ENCODE measurements at regions of chr18 and their contacts with region 1.

Region 1: DNA sequence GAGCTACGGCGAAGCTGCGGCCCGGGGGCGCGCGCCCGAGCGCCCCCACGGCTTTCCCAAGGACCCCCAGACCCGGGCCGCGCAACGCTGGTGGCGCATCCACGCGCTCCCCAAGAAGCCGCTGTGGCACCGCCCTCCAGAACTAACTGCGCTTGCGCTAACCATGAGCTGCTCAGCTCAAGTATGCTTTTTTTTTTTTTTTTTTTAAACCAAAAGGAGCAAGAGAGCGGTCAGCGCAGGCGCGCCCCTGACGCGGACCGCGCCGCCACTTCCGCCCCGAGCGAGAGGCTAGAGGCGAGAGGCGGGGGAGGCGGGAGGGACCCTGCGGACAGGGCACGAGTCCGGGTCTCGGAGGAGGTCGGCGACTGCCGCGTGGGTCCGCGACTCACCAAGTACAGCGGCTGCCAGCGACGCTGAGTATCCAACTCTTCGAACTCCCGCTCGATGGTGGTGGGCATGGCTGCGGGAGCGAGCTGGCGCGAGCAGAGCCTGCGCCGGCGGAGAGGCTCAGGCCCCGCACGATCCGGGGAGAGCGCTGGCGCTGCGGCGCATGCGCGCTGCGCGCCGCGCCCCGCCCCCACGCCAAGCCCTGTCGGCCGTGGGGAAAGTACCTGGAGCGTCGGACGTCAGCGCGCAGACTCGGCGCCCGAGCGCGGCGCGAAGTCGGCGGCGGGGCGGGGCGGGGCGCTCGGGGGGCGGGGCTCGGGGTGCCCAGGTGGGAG is at the start of gene PTPN2:
- DNase-seq: peak; percentile 85 to 97 (median 95)
- H3K4me3 ChIP-seq: peak within 1 kb of the TSS; percentile 76
- H3K4me3 Mint-ChIP-seq: peak within 1 kb of the TSS; percentile 91 to 97 (median 94)
- H3K27ac ChIP-seq: peak within 1 kb of the TSS; percentile 97
- H3K27ac Mint-ChIP-seq: peak within 1 kb of the TSS; percentile 87 to 99 (median 98)
- H3K4me1 ChIP-seq: peaks cover 50% of the 10 kb centered on the region
- H3K4me1 Mint-ChIP-seq: peaks cover 55 to 72% (median 67%) of the 10 kb centered on the region in 3 donors
- H3K27me3 ChIP-seq: no peaks in the 10 kb centered on the region
- H3K27me3 Mint-ChIP-seq: peaks cover 0 to 9% of the 10 kb centered on the region in 2 donors
- total RNA-seq, gene PTPN2: 52.6 to 60.3 TPM

Region 2: DNA sequence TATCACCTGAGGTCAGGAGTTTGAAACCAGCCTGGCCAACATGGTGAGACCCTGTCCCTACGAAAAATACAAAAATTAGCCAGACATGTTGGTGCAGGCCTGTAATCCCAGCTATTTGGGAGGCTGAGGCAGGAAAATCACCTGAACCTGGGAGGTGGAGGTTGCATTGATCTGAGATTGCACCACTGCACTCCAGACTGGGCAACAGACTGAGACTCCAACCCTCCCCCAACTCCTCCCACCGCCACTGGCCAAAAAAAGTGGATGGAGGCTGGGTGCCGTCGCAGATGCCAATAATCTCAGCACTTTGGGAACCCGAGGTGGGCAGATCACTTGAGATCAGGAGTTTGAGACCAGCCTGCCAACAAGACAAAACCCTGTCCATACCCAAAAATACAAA is 215.8 kb before region 1 on chr18:
- CTCF ChIA-PET with region 1: no interaction called
- POLR2A ChIA-PET with region 1: interaction called, 11 read pairs
- DNase-seq: no peak
- H3K4me3 ChIP-seq: no peak overlapping the region
- H3K4me3 Mint-ChIP-seq: no peak overlapping the region
- H3K27ac ChIP-seq: no peak overlapping the region
- H3K27ac Mint-ChIP-seq: no peak overlapping the region
- H3K4me1 ChIP-seq: no peaks in the 10 kb centered on the region
- H3K4me1 Mint-ChIP-seq: no peaks in the 10 kb centered on the region
- H3K27me3 ChIP-seq: no peaks in the 10 kb centered on the region
- H3K27me3 Mint-ChIP-seq: no peaks in the 10 kb centered on the region

Region 3: DNA sequence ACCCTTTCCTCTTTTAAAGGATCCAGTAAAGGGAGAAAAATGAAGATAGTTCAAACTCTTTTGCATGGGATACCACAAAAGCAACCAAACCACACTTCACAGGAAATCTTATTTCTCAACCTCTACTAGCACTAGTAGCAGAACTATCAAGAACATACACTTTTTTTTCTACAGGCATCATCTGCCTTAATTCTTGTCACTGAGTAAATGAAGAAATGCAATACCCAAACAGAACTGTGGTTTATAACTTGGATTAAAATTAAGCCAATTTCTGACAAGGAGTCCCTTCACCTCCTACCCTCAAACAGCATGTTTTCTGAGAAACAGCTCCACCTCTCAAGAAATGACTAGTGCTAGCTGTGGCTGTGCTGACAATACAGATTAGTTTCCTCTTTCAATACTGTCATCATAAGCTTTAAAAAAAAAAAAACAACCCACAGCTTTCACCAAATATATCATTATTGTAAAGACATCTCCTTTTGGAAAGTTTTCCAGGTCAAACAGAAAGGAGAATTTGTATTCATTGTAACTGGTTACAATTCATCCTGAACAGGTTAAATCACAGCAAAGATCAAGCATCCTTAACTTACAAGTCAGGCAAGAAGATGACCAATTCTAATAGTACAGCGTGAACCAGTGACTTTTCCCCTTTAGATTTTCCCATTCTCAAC is 44.2 kb before region 1 on chr18:
- CTCF ChIA-PET with region 1: interaction called, 3 read pairs
- POLR2A ChIA-PET with region 1: interaction called, 10 read pairs
- DNase-seq: peak in 2 of 5 donors; percentile 19 to 62
- H3K4me3 ChIP-seq: peak overlapping the region; percentile 15
- H3K4me3 Mint-ChIP-seq: peak overlapping the region; percentile 72 to 87 (median 80)
- H3K27ac ChIP-seq: peak overlapping the region; percentile 51
- H3K27ac Mint-ChIP-seq: peak overlapping the region; percentile 85 to 96 (median 92)
- H3K4me1 ChIP-seq: peaks cover 48% of the 10 kb centered on the region
- H3K4me1 Mint-ChIP-seq: peaks cover 61 to 82% (median 76%) of the 10 kb centered on the region in 3 donors
- H3K27me3 ChIP-seq: no peaks in the 10 kb centered on the region
- H3K27me3 Mint-ChIP-seq: no peaks in the 10 kb centered on the region

Region 4: DNA sequence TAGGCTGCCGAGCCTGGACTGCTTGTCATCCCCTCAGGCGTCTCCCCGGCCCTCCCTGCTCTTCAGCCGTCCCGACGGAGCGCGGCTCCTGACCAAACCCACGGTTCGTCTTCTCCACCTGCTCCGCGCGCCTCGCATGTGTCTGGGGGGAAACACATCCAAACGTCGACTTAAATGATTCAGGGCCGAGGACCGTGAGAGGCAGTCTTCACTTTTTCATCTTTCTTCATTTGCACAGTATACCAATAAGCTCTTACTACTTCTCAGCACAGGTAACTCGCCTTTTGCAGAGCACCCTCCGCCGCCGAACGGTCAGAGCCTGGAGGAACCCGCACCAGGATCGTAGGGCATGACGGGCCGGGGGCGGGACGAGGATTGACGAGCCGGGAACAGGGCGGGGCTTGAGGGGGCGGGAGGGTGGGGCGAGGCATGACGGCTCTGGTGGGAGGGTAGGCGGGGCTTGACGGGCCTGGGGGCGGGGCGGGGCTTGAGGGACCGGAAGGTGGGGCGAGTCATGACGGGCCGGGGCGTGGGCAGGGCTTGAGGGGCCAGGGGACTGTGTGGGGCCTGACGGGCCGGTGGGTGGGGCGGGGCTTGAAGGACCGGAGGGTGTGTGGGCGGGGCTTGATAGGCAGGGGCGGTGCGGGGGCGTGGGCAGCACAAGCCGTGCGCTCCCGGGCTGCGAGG is 63.7 kb after region 1 on chr18 and contains the start of gene SEH1L:
- CTCF ChIA-PET with region 1: interaction called, 3 read pairs
- POLR2A ChIA-PET with region 1: interaction called, 29 read pairs
- DNase-seq: peak; percentile 97 to 100 (median 98)
- H3K4me3 ChIP-seq: peak within 1 kb of the TSS; percentile 84
- H3K4me3 Mint-ChIP-seq: peak within 1 kb of the TSS; percentile 90 to 96 (median 94)
- H3K27ac ChIP-seq: peak within 1 kb of the TSS; percentile 90
- H3K27ac Mint-ChIP-seq: peak within 1 kb of the TSS; percentile 94 to 100 (median 98)
- H3K4me1 ChIP-seq: peaks cover 32% of the 10 kb centered on the region
- H3K4me1 Mint-ChIP-seq: peaks cover 22 to 40% (median 37%) of the 10 kb centered on the region in 3 donors
- H3K27me3 ChIP-seq: no peaks in the 10 kb centered on the region
- H3K27me3 Mint-ChIP-seq: peaks cover 0 to 9% of the 10 kb centered on the region in 2 donors
- total RNA-seq, gene SEH1L: 132 to 141 TPM

Region 5: DNA sequence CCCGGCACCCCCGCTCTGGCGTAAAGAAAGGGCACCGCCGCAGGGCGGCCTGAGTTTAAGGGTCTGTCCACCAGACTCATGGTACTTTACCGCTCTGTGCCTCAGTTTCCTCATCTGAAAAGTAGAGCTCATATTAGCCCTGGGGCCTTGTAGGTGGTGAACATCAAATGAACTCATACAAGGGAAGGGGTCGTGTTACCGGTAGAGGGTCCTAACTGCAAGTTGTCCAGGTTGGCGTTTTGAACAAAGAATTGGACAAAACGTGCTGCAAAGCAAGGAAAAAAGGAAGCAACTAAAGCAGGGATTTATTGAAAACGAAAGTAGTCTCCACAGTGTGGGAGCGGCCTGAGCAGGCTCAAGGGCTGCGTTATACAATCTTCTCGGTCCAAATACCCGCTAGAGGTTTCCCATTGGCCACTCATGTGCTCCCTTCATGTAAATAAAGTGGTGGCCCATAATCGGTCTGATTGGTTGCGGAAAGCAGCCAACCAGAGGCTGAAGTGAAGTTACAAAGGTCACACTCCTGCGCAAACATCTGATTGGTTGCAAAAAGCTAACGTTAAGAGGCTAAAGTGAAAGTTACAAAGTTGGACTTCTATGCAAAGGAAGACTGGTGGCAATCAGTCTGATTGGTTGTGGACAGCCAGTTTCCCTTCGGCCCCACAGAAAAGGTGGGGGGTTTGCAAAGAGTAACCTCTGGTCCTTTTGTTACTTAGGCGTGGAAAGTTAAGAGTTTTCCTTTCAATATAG is 254.0 kb after region 1 on chr18:
- CTCF ChIA-PET with region 1: no interaction called
- POLR2A ChIA-PET with region 1: interaction called, 17 read pairs
- DNase-seq: peak; percentile 26 to 84 (median 71)
- H3K4me3 ChIP-seq: peak overlapping the region; percentile 80
- H3K4me3 Mint-ChIP-seq: peak overlapping the region; percentile 92 to 99 (median 98)
- H3K27ac ChIP-seq: peak overlapping the region; percentile 45
- H3K27ac Mint-ChIP-seq: peak overlapping the region; percentile 94 to 99 (median 95)
- H3K4me1 ChIP-seq: peaks cover 10% of the 10 kb centered on the region
- H3K4me1 Mint-ChIP-seq: peaks cover 26 to 33% (median 31%) of the 10 kb centered on the region in 3 donors
- H3K27me3 ChIP-seq: no peaks in the 10 kb centered on the region
- H3K27me3 Mint-ChIP-seq: peaks cover 0 to 12% of the 10 kb centered on the region in 2 donors